Vagina (tissue), 2 donors: ENCODE measurements at regions of chr16 and their contacts with region 1.

Region 1: GRCh38 chr16:50627419-50627818 is 53.7 kb downstream of the SNX20 start:
- DNase-seq: no peak
- H3K4me3 ChIP-seq: no peak overlapping the region
- H3K27ac ChIP-seq: no peak overlapping the region
- H3K4me1 ChIP-seq: peaks cover 14% of the 10 kb centered on the region
- H3K27me3 ChIP-seq: no peaks in the 10 kb centered on the region
- CTCF ChIP-seq: peak in 1 of 3 experiments; percentile 50
- POLR2A ChIP-seq: no peak

Region 2: DNA sequence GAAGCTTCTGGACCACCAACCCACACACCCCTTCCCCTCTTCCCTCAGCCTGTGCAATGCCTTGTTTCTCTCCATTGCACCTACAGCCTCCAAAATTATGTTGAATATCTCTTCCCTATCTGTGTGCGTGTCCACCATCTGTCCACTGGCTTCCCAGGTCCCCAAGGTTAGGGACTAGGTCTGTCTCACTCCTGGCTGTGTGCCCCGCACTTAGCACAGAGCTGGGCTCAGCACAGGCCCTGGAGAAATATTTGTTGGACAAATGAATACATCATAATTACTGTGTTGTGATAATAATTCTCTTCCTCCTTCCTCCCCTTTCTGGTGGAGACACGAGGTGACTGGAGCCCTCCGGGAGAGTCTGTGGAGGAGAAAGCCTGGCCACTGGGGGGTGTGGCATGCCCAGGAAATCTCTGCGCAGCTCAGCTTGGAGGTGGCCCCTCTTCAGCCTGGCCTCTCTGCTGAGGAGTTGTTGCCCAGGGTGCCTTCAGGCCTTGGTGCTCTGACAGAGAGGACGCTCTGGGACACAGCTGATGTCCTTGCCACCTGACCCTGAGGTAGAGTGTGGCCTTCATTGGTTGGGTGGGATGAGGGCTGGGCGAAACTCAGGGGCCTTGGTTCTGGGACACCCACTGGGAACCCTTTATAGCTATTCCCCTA is 255.4 kb before region 1 on chr16:
- intact Hi-C with region 1: loop called (anchors 10 kb)
- DNase-seq: no peak
- H3K4me3 ChIP-seq: no peak overlapping the region
- H3K27ac ChIP-seq: no peak overlapping the region
- H3K4me1 ChIP-seq: peaks cover 9% of the 10 kb centered on the region
- H3K27me3 ChIP-seq: no peaks in the 10 kb centered on the region
- CTCF ChIP-seq: no peak
- POLR2A ChIP-seq: no peak

Region 3: GRCh38 chr16:50573947-50574744 is 53.3 kb before region 1 on chr16:
- intact Hi-C with region 1: no loop called
- DNase-seq: no peak
- H3K4me3 ChIP-seq: no peak overlapping the region
- H3K27ac ChIP-seq: peak overlapping the region; percentile 69
- H3K4me1 ChIP-seq: peaks cover 30% of the 10 kb centered on the region
- H3K27me3 ChIP-seq: no peaks in the 10 kb centered on the region
- CTCF ChIP-seq: no peak
- POLR2A ChIP-seq: no peak

Region 4: DNA sequence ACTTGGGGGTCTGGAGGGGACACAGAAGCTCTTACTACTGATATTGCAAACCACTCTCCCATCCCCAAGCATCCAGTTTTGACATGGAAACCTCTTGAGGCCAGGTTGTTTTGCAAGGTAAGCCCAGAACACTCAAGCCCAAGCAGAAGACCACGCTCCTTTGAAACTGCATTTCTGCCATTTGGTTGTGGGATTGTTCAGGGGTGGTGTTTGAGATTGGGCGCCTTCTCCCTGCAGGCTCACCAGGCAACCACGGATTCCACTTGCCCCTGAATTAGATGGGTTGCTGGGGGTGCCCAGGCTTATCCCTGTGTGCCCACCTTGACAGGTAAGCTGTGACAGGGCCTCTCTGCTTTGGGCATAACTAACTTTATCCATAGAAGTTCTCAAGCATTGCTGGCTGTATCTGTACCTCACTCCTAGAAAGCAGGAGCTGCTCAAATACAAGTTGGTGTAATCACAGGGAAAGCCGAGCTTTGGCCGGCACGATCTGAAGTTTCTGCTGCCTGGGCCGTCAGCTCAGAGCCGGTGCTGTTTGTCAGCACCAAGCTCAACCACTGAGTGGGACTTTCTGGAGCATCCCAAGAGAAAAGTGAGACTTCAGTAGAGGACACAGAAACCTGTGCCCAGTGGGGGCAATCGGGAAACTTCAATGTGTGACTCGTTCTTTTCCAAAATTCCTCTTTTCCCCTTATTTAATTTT is 208.1 kb after region 1 on chr16:
- intact Hi-C with region 1: no loop called
- DNase-seq: peak; percentile 43 to 79
- H3K4me3 ChIP-seq: no peak overlapping the region
- H3K27ac ChIP-seq: no peak overlapping the region
- H3K4me1 ChIP-seq: no peaks in the 10 kb centered on the region
- H3K27me3 ChIP-seq: no peaks in the 10 kb centered on the region
- CTCF ChIP-seq: no peak
- POLR2A ChIP-seq: no peak